ENCODE measurements at regions of chr12 and their contacts with region 1.

Region 1: GRCh38 chr12:75944097-75944904 is 87.3 kb downstream of the PHLDA1 start:
- DNase-seq: peak in 1 of 2 donors; percentile 52
- ATAC-seq: peak; percentile 89 to 93 (median 92)
- H3K4me3 ChIP-seq: no peak overlapping the region
- H3K4me3 Mint-ChIP-seq: peak overlapping the region; percentile 80
- H3K27ac ChIP-seq: peak overlapping the region; percentile 68
- H3K27ac Mint-ChIP-seq: peak overlapping the region; percentile 93 to 96
- H3K4me1 ChIP-seq: peaks cover 9% of the 10 kb centered on the region
- H3K4me1 Mint-ChIP-seq: peaks cover 18 to 21% of the 10 kb centered on the region in 2 donors
- H3K27me3 ChIP-seq: no peaks in the 10 kb centered on the region
- H3K27me3 Mint-ChIP-seq: no peaks in the 10 kb centered on the region
- CTCF ChIP-seq: no peak

Region 2: GRCh38 chr12:75977952-75978671 is 33.8 kb after region 1 on chr12:
- intact Hi-C with region 1: loop called (anchors 1 kb)
- DNase-seq: peak; percentile 63 to 91
- ATAC-seq: peak; percentile 88 to 98 (median 97)
- H3K4me3 ChIP-seq: no peak overlapping the region
- H3K4me3 Mint-ChIP-seq: peak overlapping the region; percentile 17
- H3K27ac ChIP-seq: peak overlapping the region; percentile 93
- H3K27ac Mint-ChIP-seq: peak overlapping the region; percentile 88 to 94
- H3K4me1 ChIP-seq: peaks cover 24% of the 10 kb centered on the region
- H3K4me1 Mint-ChIP-seq: peaks cover 22 to 31% of the 10 kb centered on the region in 2 donors
- H3K27me3 ChIP-seq: no peaks in the 10 kb centered on the region
- H3K27me3 Mint-ChIP-seq: no peaks in the 10 kb centered on the region
- CTCF ChIP-seq: no peak

Region 3: GRCh38 chr12:76020731-76021672 is 76.7 kb after region 1 on chr12:
- intact Hi-C with region 1: loop called (anchors 1 kb)
- DNase-seq: peak; percentile 63 to 87
- ATAC-seq: peak; percentile 74 to 86 (median 83)
- H3K4me3 ChIP-seq: no peak overlapping the region
- H3K4me3 Mint-ChIP-seq: peak overlapping the region; percentile 84
- H3K27ac ChIP-seq: peak overlapping the region; percentile 92
- H3K27ac Mint-ChIP-seq: peak overlapping the region; percentile 99 to 100
- H3K4me1 ChIP-seq: peaks cover 27% of the 10 kb centered on the region
- H3K4me1 Mint-ChIP-seq: peaks cover 36 to 37% of the 10 kb centered on the region in 2 donors
- H3K27me3 ChIP-seq: no peaks in the 10 kb centered on the region
- H3K27me3 Mint-ChIP-seq: no peaks in the 10 kb centered on the region
- CTCF ChIP-seq: no peak

Region 4: DNA sequence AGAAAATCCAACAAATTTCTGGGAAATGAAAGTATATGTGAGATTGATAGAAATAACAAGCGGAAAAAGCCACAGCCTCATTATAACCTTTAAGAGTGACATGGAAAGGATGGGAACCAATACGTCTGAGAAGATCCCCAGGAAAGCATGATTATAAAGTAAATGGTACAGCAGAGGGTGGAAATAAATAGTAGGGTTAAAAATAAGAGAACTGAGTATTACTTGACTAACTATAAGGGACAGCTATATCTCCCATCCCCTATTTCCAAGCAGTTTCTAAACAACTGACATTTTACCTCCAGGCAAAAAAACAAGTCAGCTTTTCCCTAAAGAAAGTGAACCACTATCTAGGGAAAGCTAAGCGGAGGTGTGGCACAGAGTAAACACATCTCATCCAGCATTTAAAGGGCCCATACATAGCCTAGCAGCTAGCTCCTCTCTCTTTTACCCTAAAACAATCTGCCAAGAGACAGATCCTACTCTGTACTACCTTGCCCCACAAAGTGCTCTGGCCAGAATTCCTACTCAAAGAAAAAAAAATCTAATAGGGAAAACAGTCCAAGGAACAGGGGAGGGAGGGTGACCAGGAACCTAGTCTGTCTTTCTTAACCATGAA is 604.0 kb after region 1 on chr12:
- intact Hi-C with region 1: no loop called
- DNase-seq: no peak
- ATAC-seq: no peak
- H3K4me3 ChIP-seq: no peak overlapping the region
- H3K4me3 Mint-ChIP-seq: no peak overlapping the region
- H3K27ac ChIP-seq: no peak overlapping the region
- H3K27ac Mint-ChIP-seq: no peak overlapping the region
- H3K4me1 ChIP-seq: peaks cover 14% of the 10 kb centered on the region
- H3K4me1 Mint-ChIP-seq: peaks cover 53 to 65% of the 10 kb centered on the region in 2 donors
- H3K27me3 ChIP-seq: no peaks in the 10 kb centered on the region
- H3K27me3 Mint-ChIP-seq: no peaks in the 10 kb centered on the region
- CTCF ChIP-seq: no peak